ENCODE measurements at regions of chr21 and their contacts with region 1.

Region 1: DNA sequence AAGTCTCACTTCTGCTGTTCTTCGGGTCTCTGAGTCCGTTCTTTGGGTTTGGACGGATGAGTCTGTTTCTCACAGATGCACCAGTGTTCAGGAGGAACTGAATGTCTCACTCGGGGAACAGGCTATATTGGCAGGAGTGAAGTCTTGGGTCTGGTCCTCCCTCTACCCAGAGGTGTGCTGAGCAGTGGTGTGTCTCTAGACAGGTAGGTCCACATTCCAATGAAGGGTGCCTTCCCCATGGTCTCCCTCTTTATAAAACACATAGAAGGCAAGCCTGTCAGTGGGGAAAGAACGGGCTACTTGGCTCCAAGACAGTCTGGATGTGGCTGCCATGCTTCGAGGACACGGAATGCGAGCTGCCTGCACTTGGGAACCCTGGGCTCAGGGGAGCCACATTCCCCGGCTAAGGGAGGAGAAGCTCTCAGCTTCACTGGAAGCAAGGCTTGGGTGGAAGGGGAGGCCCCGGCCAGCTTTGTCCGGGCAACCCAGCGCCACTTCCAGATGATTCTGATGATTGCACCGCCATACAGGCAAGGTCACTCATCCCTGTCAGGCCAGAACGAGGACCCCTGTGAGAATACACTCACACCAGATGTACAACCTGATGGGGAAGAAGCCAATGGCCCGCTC is 29.7 kb upstream of the RIPK4 start:
- DNase-seq: no peak
- H3K4me3 ChIP-seq: no peak overlapping the region
- CTCF ChIP-seq: no peak

Region 2: GRCh38 chr21:41338455-41338854 is 458.1 kb before region 1 on chr21:
- CTCF ChIA-PET with region 1: no interaction called
- POLR2A ChIA-PET with region 1: no interaction called
- DNase-seq: no peak
- H3K4me3 ChIP-seq: no peak overlapping the region
- CTCF ChIP-seq: no peak

Region 3: GRCh38 chr21:41777951-41778874 is 18.4 kb before region 1 on chr21:
- CTCF ChIA-PET with region 1: interaction called, 11 read pairs
- POLR2A ChIA-PET with region 1: no interaction called
- DNase-seq: peak; percentile 10
- H3K4me3 ChIP-seq: no peak overlapping the region
- CTCF ChIP-seq: peak; percentile 88